Activated naive CD8-positive, alpha-beta T cell treated with anti-CD3 and anti-CD28 coated beads, Interleukin-2, amount 10 ng/mL, durations not matched to agents 7 days and 5 days (primary cell): ENCODE measurements at regions of chr15 and their contacts with region 1.

Region 1: DNA sequence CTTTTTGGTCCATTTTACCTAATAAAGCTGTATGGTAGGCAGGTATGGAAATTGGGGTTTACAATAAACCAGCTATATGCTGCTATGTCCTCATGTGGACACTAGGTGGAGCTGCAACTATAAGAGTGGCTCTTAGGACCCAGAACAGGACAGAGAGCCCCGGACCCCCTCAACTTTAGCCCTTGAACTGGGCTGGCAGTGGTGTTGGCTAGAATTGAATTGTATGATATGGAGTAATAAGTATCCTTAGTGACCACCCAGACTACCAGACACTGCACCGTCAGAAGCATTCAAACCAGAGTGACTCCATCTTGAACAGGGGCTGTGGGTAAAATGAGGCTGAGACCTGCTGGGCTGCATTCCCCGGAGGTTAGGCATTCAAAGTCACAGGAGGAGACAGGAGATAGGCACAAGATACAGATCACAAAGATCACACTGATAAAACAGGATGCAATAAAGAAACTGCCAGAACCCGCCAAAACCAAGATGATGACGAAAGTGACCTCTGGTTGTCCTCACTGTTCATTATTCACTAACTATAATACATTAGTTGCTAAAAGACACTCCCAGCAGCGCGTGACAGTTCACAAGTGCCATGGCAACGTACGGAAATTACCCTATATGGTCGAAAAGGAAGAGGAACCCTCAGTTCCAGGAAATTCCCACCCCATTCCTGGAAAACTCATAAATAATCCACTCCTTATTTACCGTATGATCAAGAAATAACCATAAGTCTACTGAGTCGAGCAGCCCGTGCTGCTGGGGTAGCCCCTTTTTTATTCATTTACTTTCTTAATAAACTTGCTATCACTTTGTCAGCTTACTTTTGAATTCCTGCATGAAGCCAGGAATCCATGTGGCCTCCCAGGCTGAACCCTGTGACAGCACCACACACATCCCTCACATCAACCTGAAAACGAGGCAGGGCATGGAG is 68.7 kb upstream of the BLM start:
- DNase-seq: peak; percentile 59
- ATAC-seq: peak; percentile 74
- H3K4me3 Mint-ChIP-seq: peak overlapping the region; percentile 49
- H3K27ac Mint-ChIP-seq: peak overlapping the region; percentile 90
- H3K4me1 Mint-ChIP-seq: peaks cover 37% of the 10 kb centered on the region
- H3K27me3 Mint-ChIP-seq: no peaks in the 10 kb centered on the region

Region 2: GRCh38 chr15:90610190-90610589 is 38.2 kb before region 1 on chr15:
- POLR2A ChIA-PET with region 1: no interaction called
- DNase-seq: no peak
- ATAC-seq: no peak
- H3K4me3 Mint-ChIP-seq: no peak overlapping the region
- H3K27ac Mint-ChIP-seq: no peak overlapping the region
- H3K4me1 Mint-ChIP-seq: peaks cover 26% of the 10 kb centered on the region
- H3K27me3 Mint-ChIP-seq: no peaks in the 10 kb centered on the region

Region 3: DNA sequence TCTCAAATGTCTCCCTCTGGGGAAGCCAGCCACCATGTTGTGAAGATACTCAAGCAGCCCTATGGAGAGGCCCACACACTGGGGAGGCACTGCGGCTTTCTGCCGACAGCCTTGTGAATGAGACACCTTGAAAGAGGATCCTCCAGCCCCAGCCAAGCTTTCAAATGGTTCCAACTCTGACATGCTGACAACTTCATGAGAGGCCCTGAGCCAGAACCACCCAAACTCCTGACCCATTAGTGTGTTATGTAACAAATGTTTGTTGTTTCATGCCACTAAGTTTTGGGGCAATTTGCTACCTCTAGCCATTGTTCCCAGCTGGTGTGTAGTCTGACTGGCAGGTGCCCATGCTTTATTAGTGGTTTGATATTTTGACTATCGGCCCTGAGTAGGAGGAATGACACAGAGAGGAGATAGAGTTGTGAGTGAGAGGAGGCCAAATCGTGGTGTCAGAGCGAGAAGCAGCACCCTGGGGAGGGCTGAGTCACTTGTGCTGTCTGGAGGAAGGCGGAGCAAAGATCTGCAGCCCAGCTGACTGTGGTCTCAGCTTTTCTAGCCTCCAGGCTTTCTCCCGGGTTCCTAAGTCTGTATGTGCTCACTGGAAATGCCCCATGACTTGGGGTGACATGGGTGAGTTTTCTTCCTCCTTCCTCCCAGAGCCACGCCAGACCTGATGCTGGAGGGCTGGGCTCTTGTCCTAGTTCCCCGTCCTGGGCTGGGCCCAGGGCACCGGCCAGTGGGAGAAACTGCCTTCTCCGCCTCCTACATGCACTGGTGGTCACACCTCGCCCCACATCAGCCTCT is 12.0 kb after region 1 on chr15:
- POLR2A ChIA-PET with region 1: interaction called, 35 read pairs
- DNase-seq: peak; percentile 68
- ATAC-seq: peak; percentile 79
- H3K4me3 Mint-ChIP-seq: peak overlapping the region; percentile 79
- H3K27ac Mint-ChIP-seq: peak overlapping the region; percentile 87
- H3K4me1 Mint-ChIP-seq: peaks cover 65% of the 10 kb centered on the region
- H3K27me3 Mint-ChIP-seq: peaks cover 3% of the 10 kb centered on the region

Region 4: GRCh38 chr15:90686435-90687218 is 38.2 kb after region 1 on chr15:
- POLR2A ChIA-PET with region 1: interaction called, 10 read pairs
- DNase-seq: no peak
- ATAC-seq: peak; percentile 95
- H3K4me3 Mint-ChIP-seq: peak overlapping the region; percentile 69
- H3K27ac Mint-ChIP-seq: peak overlapping the region; percentile 96
- H3K4me1 Mint-ChIP-seq: peaks cover 40% of the 10 kb centered on the region
- H3K27me3 Mint-ChIP-seq: no peaks in the 10 kb centered on the region

Region 5: GRCh38 chr15:90710436-90711027 is 62.1 kb after region 1 on chr15:
- POLR2A ChIA-PET with region 1: no interaction called
- DNase-seq: no peak
- ATAC-seq: no peak
- H3K4me3 Mint-ChIP-seq: no peak overlapping the region
- H3K27ac Mint-ChIP-seq: peak overlapping the region; percentile 4
- H3K4me1 Mint-ChIP-seq: peaks cover 16% of the 10 kb centered on the region
- H3K27me3 Mint-ChIP-seq: no peaks in the 10 kb centered on the region

Region 6: DNA sequence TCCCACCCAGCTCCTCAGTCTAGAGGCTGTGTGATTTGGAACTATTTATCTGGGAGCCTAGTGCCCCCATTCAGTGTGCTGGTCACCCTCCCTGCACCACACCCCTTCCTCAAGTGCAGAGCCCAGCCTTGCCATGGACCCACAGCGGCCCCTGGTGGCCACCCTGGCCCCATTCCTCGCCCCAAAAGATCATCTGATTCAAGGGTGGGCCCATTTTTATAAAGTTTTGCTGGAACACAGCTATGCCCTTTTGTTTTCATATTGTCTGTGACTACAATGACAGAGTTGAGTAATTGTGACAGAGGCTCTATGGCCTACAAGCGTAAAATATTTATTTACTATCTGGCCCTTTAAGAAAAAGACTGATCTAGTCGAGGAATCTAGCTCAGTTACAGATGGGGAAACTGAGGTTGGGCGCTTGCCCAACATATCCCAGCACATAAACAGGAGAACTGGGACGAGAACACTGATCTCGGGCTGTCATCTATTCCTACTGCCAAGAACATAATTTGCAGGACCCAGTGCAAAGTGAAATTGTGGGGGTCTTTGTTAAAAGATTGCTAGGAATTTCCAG is 237.7 kb after region 1 on chr15:
- POLR2A ChIA-PET with region 1: interaction called, 11 read pairs
- DNase-seq: peak; percentile 88
- ATAC-seq: peak; percentile 64
- H3K4me3 Mint-ChIP-seq: peak overlapping the region; percentile 60
- H3K27ac Mint-ChIP-seq: peak overlapping the region; percentile 81
- H3K4me1 Mint-ChIP-seq: peaks cover 18% of the 10 kb centered on the region
- H3K27me3 Mint-ChIP-seq: no peaks in the 10 kb centered on the region